ENCODE measurements at regions of chr4 and their contacts with region 1.

Region 1: DNA sequence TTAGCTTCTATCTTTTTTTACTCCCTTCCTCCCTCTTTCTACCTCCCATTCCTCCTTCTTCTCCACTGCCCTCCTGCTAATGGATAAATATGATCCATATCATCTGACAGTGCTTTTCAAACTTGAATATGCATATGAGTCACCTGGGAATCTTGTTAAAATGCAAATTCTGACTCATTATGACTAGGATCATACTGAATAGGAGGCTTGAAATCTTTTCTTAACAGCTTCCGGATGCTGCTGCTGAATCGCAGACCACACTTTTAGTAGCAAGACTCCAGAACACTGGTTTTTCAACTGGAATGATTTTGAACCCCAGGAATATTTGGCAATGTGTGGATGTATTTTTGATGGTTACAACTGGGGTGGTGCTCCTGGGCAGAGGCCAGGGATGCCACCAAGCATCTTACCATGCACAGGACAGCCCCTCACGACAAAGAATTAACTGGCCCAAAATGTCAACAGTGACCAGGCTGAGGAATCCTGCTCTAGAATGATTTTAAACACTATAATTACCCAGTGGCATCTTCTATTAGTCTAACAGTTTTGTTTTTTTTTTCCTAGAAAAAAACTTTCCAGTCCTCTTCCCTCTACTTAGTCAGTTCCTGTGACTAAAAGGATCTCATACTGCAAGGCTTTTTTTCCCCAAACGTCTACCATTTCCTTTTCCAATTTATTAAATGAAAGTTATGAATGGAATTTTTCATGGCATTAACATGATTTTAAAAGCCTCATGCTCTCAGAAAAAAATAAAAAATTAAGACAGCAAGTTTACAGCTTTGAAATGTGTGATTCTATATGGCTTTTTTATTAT is 10.6 kb upstream of the PYURF start:
- DNase-seq: no peak
- H3K4me3 ChIP-seq: no peak overlapping the region
- H3K27ac ChIP-seq: no peak overlapping the region
- H3K4me1 ChIP-seq: no peaks in the 10 kb centered on the region
- H3K27me3 ChIP-seq: no peaks in the 10 kb centered on the region
- CTCF ChIP-seq: no peak
- POLR2A ChIP-seq: no peak

Region 2: GRCh38 chr4:88659055-88659889 is 125.1 kb after region 1 on chr4:
- intact Hi-C with region 1: loop called (anchors 1 kb)
- DNase-seq: peak; percentile 58
- H3K4me3 ChIP-seq: no peak overlapping the region
- H3K27ac ChIP-seq: peak overlapping the region; percentile 56 to 64
- H3K4me1 ChIP-seq: peaks cover 4% of the 10 kb centered on the region
- H3K27me3 ChIP-seq: no peaks in the 10 kb centered on the region
- CTCF ChIP-seq: peak; percentile 55 to 83 (median 69)
- POLR2A ChIP-seq: no peak

Region 3: DNA sequence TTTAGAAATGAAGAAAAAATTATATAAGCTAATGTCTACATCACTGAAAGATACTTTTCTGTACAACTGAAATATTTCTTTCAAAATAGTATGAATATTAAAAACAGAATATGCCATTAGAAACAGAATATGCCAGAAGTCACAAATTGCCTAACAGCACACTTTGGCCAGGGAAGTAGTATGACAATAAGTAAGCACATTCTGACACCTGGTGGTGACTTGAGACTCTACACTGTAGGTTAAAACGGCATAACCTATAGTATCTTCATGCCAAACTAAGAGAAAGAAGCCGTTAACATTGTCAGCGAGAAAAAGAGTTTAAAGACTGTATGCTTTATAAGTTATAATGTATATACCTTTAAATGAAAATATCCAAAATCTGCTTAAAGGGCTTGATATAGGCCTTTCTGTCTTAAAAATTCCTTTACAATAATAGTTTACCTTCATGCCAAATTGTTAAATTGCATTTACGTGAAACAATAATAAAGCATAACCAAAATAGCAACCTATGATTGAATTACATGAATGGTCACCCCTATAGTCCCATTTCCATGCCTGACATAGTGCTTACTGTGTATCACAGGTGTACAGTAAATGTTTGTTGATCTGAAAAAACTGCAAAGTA is 490.0 kb after region 1 on chr4:
- intact Hi-C with region 1: loop called (anchors 10 kb)
- DNase-seq: peak; percentile 69
- H3K4me3 ChIP-seq: no peak overlapping the region
- H3K27ac ChIP-seq: no peak overlapping the region
- H3K4me1 ChIP-seq: no peaks in the 10 kb centered on the region
- H3K27me3 ChIP-seq: no peaks in the 10 kb centered on the region
- CTCF ChIP-seq: peak; percentile 67 to 93 (median 89)
- POLR2A ChIP-seq: no peak